Activated CD8-positive, alpha-beta T cell treated with anti-CD3 and anti-CD28 coated beads for 36 hours (primary cell): ENCODE measurements at regions of chr17 and their contacts with region 1.

Region 1: GRCh38 chr17:16453493-16453851 is 38.1 kb downstream of the TRPV2 start:
- DNase-seq: no peak
- ATAC-seq: no peak
- H3K4me3 Mint-ChIP-seq: no peak overlapping the region
- H3K27ac Mint-ChIP-seq: no peak overlapping the region
- H3K4me1 Mint-ChIP-seq: peaks cover 16% of the 10 kb centered on the region
- H3K27me3 Mint-ChIP-seq: no peaks in the 10 kb centered on the region
- CTCF ChIP-seq: peak; percentile 13

Region 2: DNA sequence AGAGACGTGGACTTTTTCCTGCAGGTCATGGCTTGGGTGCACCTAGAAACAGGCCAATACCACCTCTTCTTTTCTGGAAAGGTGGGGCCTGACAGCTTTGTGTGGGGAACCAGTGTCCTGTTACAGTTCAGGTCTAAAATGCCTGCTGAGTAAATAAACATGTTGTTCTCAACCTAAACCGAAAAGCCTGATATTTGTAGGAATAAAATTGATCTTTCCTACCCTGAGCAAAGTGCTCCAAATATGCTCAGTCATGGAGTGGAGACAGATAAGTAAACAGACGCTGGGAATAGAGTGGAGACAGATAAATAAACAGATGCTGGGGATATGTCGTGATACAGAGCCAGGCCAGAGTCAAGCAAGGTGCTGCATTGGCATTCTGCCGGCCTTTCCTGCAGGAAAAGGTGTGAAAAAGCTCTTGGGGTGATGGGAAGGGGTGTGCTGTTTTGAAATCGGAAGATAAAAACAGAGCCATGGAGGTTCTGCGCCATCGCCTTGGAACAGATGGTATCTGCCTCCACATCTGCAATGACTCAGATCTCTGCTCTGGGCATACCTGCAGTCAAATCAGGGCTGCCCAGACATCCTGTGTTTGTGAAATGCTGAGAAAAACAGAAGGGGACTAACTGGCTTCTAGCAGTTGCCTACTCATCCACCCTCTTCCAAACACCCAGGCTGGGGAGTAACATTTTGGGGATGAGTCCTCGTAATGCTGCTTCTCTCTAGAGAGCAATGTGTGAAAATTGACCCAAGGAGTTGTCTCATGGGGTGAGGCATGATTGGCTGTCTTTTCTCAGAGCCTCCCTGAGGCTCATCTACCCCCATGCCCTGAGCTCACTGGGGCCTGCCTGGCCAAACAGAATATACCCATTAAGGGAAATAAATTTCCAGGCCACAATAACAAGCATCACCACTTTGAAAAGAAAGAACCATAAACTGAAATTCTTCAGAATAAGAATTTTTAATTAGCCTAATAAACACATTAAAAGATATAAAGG is 54.9 kb before region 1 on chr17:
- CTCF ChIA-PET with region 1: no interaction called
- POLR2A ChIA-PET with region 1: no interaction called
- intact Hi-C with region 1: no loop called
- DNase-seq: peak; percentile 37
- ATAC-seq: peak; percentile 86
- H3K4me3 Mint-ChIP-seq: no peak overlapping the region
- H3K27ac Mint-ChIP-seq: no peak overlapping the region
- H3K4me1 Mint-ChIP-seq: peaks cover 5% of the 10 kb centered on the region
- H3K27me3 Mint-ChIP-seq: no peaks in the 10 kb centered on the region
- CTCF ChIP-seq: no peak

Region 3: DNA sequence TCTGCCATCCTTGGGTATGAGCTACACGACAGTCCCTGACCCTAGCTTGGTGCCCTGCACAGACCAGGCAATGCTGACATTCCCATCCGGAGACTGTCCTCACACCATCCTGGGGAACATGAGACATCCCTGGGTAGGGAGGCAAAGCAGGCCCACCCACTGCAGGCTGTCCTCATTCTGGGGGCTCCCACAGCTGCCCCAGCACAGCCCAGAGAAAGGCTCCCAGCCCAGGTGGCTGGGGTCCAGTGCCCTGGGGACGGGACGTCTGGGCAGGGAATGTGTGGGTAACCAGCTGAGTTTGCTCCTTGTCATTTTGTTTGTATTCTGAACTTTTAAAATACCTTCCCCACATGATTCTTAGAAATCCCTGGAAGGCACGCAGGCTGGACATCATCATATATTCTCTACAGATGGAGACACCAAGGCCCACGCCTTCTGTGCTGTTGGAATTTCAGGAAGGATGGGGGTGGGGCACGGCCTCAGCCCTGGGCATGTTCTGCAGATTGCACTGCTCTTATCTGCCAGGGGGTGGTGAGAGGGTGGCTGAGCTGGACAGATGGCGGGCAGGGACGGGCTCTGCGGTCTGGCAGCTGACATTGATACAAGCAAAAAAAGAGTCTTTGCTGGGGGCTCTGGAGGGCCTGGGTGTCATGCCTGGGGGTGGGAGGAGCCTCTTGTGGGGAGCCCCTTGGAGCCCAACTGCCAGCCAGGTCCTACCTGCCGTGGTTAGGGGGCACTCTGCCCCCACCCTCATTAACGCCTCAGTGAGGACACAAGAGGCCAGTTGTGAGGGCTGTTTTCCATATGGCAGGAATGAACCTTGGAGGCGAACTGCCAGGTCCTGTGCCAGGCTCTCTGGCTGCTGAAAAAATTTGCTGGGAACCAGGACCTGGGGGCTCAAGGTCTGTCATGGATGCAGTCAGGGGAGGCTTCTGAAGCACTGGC is 10.2 kb after region 1 on chr17:
- CTCF ChIA-PET with region 1: interaction called, 12 read pairs
- POLR2A ChIA-PET with region 1: interaction called, 4 read pairs
- intact Hi-C with region 1: no loop called
- DNase-seq: no peak
- ATAC-seq: no peak
- H3K4me3 Mint-ChIP-seq: no peak overlapping the region
- H3K27ac Mint-ChIP-seq: no peak overlapping the region
- H3K4me1 Mint-ChIP-seq: no peaks in the 10 kb centered on the region
- H3K27me3 Mint-ChIP-seq: no peaks in the 10 kb centered on the region
- CTCF ChIP-seq: no peak

Region 4: GRCh38 chr17:16512011-16512410 is 58.5 kb after region 1 on chr17:
- CTCF ChIA-PET with region 1: interaction called, 116 read pairs
- POLR2A ChIA-PET with region 1: no interaction called
- intact Hi-C with region 1: no loop called
- DNase-seq: no peak
- ATAC-seq: no peak
- H3K4me3 Mint-ChIP-seq: no peak overlapping the region
- H3K27ac Mint-ChIP-seq: no peak overlapping the region
- H3K4me1 Mint-ChIP-seq: peaks cover 4% of the 10 kb centered on the region
- H3K27me3 Mint-ChIP-seq: peaks cover 6% of the 10 kb centered on the region
- CTCF ChIP-seq: no peak

Region 5: DNA sequence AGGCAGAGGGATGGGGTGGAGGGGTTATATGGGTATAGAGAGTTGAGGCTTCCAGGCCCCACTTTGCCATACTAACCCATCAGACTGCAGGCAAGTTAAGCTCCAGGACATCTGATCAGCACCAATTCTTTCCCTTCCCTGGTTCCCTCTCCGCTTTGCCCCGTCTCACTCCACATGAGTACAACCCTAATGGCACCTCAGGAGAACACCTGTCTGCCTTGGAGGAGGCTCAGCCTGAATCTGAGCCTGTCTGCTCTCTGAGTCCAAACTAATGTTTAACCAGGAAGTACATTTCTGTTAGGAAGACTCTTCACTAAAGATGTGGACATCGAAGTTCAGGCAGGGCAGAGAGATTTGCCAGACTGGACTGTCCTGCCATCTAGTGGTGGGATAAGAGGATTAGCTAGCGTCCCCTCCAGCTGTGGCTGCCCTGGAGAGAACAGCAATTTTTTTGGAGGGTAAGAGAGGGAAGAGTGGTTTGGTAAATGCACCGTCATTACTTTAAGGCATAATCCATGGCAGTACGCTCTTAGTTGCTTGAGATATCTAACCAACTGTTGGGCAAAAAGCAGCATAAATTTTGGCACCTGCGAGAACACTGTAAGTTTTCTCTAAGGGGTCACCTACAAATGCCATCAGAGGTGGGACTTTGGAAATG is 67.7 kb after region 1 on chr17:
- CTCF ChIA-PET with region 1: interaction called, 116 read pairs
- POLR2A ChIA-PET with region 1: no interaction called
- intact Hi-C with region 1: loop called (anchors 2 kb)
- DNase-seq: peak; percentile 76
- ATAC-seq: peak; percentile 97
- H3K4me3 Mint-ChIP-seq: no peak overlapping the region
- H3K27ac Mint-ChIP-seq: no peak overlapping the region
- H3K4me1 Mint-ChIP-seq: peaks cover 9% of the 10 kb centered on the region
- H3K27me3 Mint-ChIP-seq: peaks cover 27% of the 10 kb centered on the region
- CTCF ChIP-seq: peak; percentile 90

Region 6: DNA sequence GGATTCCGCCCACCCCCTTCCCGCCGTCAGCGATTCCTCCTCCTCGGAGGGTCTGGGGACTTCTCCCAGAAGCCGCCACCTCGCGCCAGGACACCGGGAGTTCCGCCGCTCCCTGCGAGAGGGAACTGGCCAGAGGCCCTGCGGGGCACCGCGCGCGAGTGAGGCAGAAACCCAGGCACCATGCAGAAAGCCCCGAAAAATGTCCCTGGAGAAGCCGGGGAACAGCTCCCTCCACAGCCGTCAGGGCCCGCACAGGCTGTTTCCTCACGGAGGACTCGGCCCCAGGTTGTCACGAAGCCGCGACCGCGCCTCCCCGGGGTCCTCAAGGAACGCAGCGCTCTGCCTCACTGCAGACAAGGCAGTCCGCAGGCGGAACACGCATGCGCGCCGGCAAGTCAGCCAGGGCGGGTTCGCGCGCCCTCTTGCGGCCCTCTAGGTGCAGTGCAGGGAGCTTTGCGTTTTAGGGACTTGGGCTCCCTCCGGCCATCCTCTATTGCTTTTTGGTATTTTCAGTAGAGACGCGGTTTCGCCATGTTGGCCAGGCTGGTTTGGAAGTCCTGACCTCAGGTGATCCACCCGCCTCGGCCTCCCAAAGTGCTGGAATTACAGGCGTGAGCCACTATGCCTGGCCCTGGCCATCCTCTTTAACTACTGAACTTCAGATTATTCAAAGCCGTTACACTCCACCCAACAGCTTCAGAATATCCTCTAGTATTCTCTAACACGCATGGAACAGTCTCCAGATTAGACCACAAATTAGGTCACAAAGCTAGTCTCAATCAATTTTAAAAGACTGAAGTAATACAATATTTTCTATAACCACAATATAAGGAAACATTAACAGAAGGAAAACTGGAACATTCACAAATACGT is 135.9 kb after region 1 on chr17:
- CTCF ChIA-PET with region 1: interaction called, 11 read pairs
- POLR2A ChIA-PET with region 1: no interaction called
- intact Hi-C with region 1: no loop called
- DNase-seq: peak; percentile 95
- ATAC-seq: peak; percentile 97
- H3K4me3 Mint-ChIP-seq: peak overlapping the region; percentile 65
- H3K27ac Mint-ChIP-seq: no peak overlapping the region
- H3K4me1 Mint-ChIP-seq: peaks cover 7% of the 10 kb centered on the region
- H3K27me3 Mint-ChIP-seq: peaks cover 21% of the 10 kb centered on the region
- CTCF ChIP-seq: peak; percentile 97